ENCODE measurements at regions of chr16 and their contacts with region 1.

Region 1: DNA sequence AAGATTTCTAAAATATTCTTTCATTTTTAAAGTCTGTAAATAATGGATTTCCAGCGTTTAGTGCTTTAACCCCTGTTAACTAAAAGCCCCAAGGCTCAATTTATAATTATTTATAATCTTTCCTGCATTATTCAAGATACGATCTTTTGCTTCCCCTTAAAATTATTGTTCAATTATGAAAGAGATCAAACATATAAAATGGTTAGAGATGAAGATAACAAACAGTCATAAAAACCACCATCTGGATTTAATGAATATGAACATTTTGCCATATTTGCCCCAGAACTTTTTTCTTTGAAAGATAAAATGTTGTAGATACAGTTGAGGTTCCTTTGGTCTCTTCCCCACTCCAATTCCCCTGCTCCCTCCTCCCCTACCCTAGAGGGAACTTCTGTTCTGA is 17.6 kb downstream of the WWP2 start:
- DNase-seq: no peak
- ATAC-seq: no peak

Region 2: DNA sequence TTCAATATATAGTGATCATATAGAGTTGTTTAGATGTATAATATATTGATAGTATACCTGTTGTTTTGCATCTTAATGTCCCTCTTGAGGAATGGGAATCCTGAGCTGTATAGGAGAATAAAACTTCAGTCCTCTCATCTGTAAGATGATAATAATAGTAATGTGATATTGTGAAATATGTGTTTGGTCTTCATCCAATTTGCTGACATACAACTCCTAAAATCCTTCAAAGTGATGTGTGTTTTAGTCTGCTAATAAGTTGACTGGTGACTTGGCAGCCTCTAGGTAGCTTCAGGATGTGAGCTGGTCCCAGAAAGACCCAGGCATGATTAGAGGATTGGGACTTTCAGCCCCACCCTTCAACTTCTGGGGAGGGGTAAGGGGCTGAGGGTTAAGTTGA is 236.8 kb before region 1 on chr16:
- intact Hi-C with region 1: no loop called
- DNase-seq: no peak
- ATAC-seq: no peak

Region 3: GRCh38 chr16:69745959-69746358 is 33.8 kb before region 1 on chr16:
- intact Hi-C with region 1: loop called (anchors 2 kb)
- DNase-seq: no peak
- ATAC-seq: no peak

Region 4: GRCh38 chr16:69796351-69797118 is 16.8 kb after region 1 on chr16:
- intact Hi-C with region 1: no loop called
- DNase-seq: no peak
- ATAC-seq: peak; percentile 92